ENCODE measurements at regions of chr1 and their contacts with region 1.

Region 1: DNA sequence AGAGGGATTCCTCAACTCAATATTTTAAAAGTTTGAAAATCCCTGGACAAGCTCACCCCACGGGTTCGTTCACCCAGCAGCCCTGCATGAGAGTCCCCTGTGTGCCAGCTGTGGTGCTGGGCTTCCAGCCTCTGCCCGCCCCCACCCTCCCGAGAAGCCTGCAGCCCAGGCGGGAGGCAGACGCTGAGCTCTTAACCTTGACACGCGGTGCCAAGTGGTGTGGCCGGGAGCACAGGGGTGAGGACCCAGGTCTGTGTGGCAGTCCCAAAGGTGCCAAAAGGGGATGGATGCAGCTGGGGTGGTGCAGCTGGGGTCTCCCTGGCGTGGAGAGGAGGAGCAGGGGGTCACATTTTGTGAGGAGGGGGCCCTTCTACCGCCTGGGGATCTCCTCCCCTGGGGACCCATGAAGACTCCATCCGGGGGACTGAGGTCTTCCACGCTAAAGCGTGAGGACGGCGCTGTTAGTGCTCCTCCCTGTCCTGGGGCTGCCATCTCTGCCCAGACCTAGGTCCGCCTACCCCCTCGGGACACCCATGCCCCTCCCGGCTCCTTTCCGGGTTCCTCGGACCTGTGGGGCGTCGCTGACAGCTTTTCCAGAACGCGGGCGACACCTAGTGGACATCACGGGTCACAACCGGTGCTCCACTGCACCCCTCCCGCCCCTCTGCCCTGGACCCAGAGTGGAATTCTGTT is 12.9 kb downstream of the PLA2G2F start:
- DNase-seq: peak; percentile 81
- H3K4me3 Mint-ChIP-seq: peak overlapping the region; percentile 62
- H3K27ac Mint-ChIP-seq: no peak overlapping the region
- H3K4me1 Mint-ChIP-seq: peaks cover 16% of the 10 kb centered on the region
- H3K27me3 Mint-ChIP-seq: no peaks in the 10 kb centered on the region

Region 2: DNA sequence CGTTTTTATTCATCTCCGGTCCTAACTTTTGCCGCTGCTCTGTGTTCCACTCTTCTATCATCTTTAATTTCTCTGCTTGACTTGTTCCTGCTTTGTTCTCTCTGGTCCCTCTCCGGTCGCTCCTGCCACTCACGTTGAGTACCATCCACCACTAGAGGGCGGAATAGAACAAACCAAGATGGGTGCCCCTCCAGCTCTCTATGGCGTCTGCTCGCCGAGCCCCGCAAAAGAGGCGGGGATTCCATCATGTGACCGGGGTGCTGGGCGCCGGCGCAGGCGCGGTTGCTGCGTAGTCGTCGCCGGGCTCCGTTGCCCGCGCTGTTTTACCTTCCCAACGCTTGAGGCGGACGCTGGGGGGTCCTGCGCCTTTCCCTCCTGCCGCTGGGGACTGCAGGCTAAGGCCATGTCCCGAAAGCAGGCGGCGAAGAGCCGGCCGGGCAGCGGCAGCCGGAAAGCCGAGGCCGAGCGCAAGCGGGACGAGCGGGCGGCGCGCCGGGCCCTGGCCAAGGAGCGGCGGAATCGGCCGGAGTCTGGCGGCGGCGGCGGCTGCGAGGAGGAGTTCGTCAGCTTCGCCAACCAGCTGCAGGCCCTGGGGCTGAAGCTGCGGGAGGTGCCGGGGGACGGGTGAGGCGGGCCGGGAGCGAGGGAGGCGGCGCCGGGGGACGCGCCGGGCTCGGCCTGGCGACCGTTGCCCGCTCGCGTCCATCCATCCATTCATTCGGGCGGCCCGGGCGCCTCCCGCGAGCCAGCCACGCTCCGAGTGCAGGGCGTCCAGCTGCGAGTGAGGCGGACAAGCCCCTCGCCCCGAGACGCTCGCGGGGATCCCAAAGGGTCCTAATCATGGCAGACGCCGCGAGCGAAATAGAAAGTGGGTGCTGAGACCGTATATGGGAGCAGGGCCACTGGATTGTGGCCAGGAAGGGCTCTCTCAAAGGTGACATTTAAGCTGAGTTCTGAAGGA is 269.7 kb before region 1 on chr1 and contains the start of gene OTUD3:
- CTCF ChIA-PET with region 1: interaction called, 20 read pairs
- POLR2A ChIA-PET with region 1: no interaction called
- DNase-seq: peak; percentile 96
- H3K4me3 Mint-ChIP-seq: peak within 1 kb of the TSS; percentile 84
- H3K27ac Mint-ChIP-seq: peak within 1 kb of the TSS; percentile 31
- H3K4me1 Mint-ChIP-seq: peaks cover 28% of the 10 kb centered on the region
- H3K27me3 Mint-ChIP-seq: peaks cover 9% of the 10 kb centered on the region
- total RNA-seq, gene OTUD3: 6.7 to 7.6 TPM

Region 3: GRCh38 chr1:19918057-19918456 is 234.0 kb before region 1 on chr1:
- CTCF ChIA-PET with region 1: interaction called, 48 read pairs
- POLR2A ChIA-PET with region 1: no interaction called
- DNase-seq: peak; percentile 80
- H3K4me3 Mint-ChIP-seq: no peak overlapping the region
- H3K27ac Mint-ChIP-seq: no peak overlapping the region
- H3K4me1 Mint-ChIP-seq: no peaks in the 10 kb centered on the region
- H3K27me3 Mint-ChIP-seq: no peaks in the 10 kb centered on the region

Region 4: DNA sequence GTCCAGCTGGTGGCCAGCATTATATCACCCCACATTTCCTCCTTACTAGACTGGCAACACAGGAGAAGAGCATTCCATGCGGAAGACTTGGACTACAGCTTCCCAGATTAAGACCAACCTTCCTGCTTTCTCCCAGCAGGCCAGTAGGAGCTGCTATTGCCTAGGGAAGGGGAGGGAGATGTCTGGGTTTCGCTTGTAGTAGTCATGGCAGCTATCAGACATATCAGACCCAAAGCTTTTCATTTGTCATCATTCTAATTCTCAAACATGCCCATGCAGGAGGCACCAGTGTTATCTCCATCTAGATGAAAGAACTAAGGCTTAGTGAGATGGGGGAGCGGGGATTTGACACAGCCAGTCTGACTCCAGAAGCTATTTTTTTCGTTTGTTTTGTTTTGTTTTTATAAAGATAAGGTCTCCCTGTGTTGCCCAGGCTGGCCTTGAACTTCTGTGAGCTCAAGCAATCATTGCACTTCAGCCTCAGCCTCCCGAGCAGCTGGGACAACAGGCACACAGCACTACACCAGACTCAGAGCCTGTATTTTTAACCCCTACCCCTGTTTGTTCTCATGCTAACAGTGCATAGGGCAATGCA is 177.1 kb before region 1 on chr1:
- CTCF ChIA-PET with region 1: interaction called, 11 read pairs
- POLR2A ChIA-PET with region 1: no interaction called
- DNase-seq: peak; percentile 19
- H3K4me3 Mint-ChIP-seq: no peak overlapping the region
- H3K27ac Mint-ChIP-seq: no peak overlapping the region
- H3K4me1 Mint-ChIP-seq: no peaks in the 10 kb centered on the region
- H3K27me3 Mint-ChIP-seq: peaks cover 7% of the 10 kb centered on the region

Region 5: GRCh38 chr1:20100632-20101355 is 51.3 kb before region 1 on chr1:
- CTCF ChIA-PET with region 1: interaction called, 11 read pairs
- POLR2A ChIA-PET with region 1: no interaction called
- DNase-seq: peak; percentile 22
- H3K4me3 Mint-ChIP-seq: no peak overlapping the region
- H3K27ac Mint-ChIP-seq: no peak overlapping the region
- H3K4me1 Mint-ChIP-seq: peaks cover 10% of the 10 kb centered on the region
- H3K27me3 Mint-ChIP-seq: no peaks in the 10 kb centered on the region

Region 6: GRCh38 chr1:20165522-20165951 is 13.5 kb after region 1 on chr1:
- CTCF ChIA-PET with region 1: interaction called, 10 read pairs
- POLR2A ChIA-PET with region 1: no interaction called
- DNase-seq: peak; percentile 30
- H3K4me3 Mint-ChIP-seq: no peak overlapping the region
- H3K27ac Mint-ChIP-seq: no peak overlapping the region
- H3K4me1 Mint-ChIP-seq: no peaks in the 10 kb centered on the region
- H3K27me3 Mint-ChIP-seq: peaks cover 3% of the 10 kb centered on the region

Region 7: GRCh38 chr1:20194757-20195461 is 42.9 kb after region 1 on chr1:
- CTCF ChIA-PET with region 1: interaction called, 16 read pairs
- POLR2A ChIA-PET with region 1: no interaction called
- DNase-seq: peak; percentile 78
- H3K4me3 Mint-ChIP-seq: no peak overlapping the region
- H3K27ac Mint-ChIP-seq: no peak overlapping the region
- H3K4me1 Mint-ChIP-seq: peaks cover 3% of the 10 kb centered on the region
- H3K27me3 Mint-ChIP-seq: peaks cover 30% of the 10 kb centered on the region

Region 8: GRCh38 chr1:20271498-20272400 is 119.7 kb after region 1 on chr1:
- CTCF ChIA-PET with region 1: no interaction called
- POLR2A ChIA-PET with region 1: no interaction called
- DNase-seq: no peak
- H3K4me3 Mint-ChIP-seq: no peak overlapping the region
- H3K27ac Mint-ChIP-seq: no peak overlapping the region
- H3K4me1 Mint-ChIP-seq: no peaks in the 10 kb centered on the region
- H3K27me3 Mint-ChIP-seq: peaks cover 26% of the 10 kb centered on the region

Measured in activated CD4-positive, alpha-beta memory T cell treated with anti-CD3 and anti-CD28 coated beads, Interleukin-2, amount 10 ng/mL, durations not matched to agents 7 days and 5 days (primary cell).